ENCODE measurements at regions of chr11 and their contacts with region 1.

Region 1: GRCh38 chr11:8911029-8911826 is at the start of gene AKIP1:
- DNase-seq: no peak
- H3K4me3 ChIP-seq: peak within 1 kb of the TSS; percentile 85
- CTCF ChIP-seq: no peak

Region 2: DNA sequence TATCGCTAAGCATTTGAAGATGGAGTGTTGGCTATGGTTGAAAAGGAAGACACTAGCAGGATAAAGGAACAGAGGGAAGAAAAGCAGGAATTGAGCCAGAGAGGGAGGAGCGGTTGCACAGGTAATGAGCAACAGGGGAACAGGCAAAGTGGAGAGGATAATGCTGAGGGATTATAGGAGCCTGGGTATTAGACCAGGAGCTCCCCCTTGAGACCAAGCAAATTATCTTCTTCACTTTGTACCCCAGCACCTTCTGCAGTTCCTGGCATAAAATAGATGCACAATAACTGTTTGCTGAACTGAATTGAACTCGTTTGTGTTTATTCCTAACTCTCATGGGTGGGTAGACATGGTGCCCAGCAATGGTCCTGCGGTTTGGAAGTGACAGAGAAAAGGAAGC is 1059.8 kb before region 1 on chr11:
- CTCF ChIA-PET with region 1: no interaction called
- POLR2A ChIA-PET with region 1: no interaction called
- DNase-seq: no peak
- H3K4me3 ChIP-seq: no peak overlapping the region
- CTCF ChIP-seq: no peak

Region 3: DNA sequence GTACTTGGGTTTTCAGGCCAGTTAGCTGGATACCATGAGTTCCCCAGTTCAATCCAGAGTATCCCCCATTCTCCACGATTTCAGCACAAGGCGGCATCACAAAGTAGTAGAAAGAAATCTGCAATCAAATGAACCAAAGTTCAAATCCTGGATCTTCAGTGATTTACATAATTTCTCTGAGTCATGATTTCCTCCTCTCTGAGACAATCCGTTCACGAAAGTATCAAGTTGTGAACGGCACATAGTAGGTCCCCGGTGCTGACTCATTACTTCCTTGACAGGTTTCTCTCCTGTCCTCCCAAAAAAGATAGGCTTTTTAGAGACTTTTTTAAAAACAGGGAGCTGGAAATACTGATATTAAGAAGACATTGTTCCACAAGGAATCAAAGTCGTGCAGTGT is 69.3 kb before region 1 on chr11:
- CTCF ChIA-PET with region 1: no interaction called
- POLR2A ChIA-PET with region 1: no interaction called
- DNase-seq: no peak
- H3K4me3 ChIP-seq: no peak overlapping the region
- CTCF ChIP-seq: no peak

Region 4: GRCh38 chr11:8937159-8937558 is 25.9 kb after region 1 on chr11:
- CTCF ChIA-PET with region 1: interaction called, 10 read pairs
- POLR2A ChIA-PET with region 1: no interaction called
- DNase-seq: no peak
- H3K4me3 ChIP-seq: no peak overlapping the region
- CTCF ChIP-seq: no peak

Region 5: GRCh38 chr11:8948886-8949285 is 37.7 kb after region 1 on chr11:
- CTCF ChIA-PET with region 1: interaction called, 10 read pairs
- POLR2A ChIA-PET with region 1: no interaction called
- DNase-seq: no peak
- H3K4me3 ChIP-seq: no peak overlapping the region
- CTCF ChIP-seq: no peak

Region 6: DNA sequence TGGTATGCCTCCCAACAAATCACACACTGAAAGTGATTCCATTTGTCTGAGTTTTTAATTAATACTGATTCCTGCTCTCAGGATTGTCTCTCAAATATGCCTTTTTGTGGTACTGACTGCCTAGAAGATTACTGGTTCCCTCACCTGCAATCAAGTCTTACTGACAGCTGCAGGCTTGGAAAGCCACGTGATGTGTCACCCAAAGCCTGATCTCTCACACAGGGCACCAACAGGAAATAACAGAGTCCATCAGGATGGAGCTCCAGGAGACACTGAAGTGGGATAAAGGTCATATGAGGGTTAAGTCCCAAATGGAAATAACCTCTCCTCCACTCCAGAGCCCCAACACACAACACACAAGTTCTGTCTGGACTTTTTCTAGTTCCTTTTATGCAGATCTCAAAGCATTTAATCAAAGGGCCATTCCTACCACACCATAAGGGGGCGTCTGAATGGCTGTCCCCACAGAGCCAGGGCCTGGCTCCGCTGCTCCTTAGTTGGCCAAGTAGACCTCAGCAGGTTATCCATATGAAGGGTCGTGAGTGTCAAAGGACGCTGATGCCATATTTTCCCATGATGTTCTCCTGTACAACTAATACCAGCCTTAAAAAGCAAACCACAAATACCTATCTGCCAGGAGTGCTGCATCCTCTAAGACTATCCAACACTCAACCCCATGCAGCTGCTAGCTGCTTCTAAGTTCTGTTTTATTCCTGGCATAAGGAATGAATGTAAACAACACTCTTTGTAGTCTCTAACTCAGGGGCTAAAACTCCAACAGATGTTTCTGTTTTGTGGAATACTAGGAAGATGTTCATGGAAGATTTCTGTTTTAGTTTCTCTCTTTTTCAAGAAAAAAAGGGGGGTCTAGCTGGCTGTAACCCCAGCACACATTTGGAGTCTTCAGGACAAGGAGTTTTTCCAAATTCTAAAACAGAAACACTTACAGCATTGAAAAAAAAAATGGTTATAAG is 167.2 kb after region 1 on chr11:
- CTCF ChIA-PET with region 1: no interaction called
- POLR2A ChIA-PET with region 1: no interaction called
- DNase-seq: no peak
- H3K4me3 ChIP-seq: no peak overlapping the region
- CTCF ChIP-seq: no peak